Panc1 (cell line): ENCODE measurements at regions of chrX and their contacts with region 1.

Region 1: GRCh38 chrX:51494409-51494808 is 2.0 kb downstream of the NUDT11 start:
- DNase-seq: no peak
- ATAC-seq: no peak
- H3K4me3 ChIP-seq: peak overlapping the region; percentile 52 to 70; a peak in 3 of 4 replicates
- H3K27ac ChIP-seq: no peak overlapping the region
- H3K4me1 ChIP-seq: no peaks in the 10 kb centered on the region; the same call in none of the 2 replicates
- H3K27me3 ChIP-seq: no peaks in the 10 kb centered on the region
- CTCF ChIP-seq: peak; percentile 21; the same call in 1 of the 2 replicates

Region 2: GRCh38 chrX:51598899-51599298 is 104.5 kb after region 1 on chrX:
- CTCF ChIA-PET with region 1: no interaction called
- POLR2A ChIA-PET with region 1: no interaction called
- in situ Hi-C with region 1: no loop called
- intact Hi-C with region 1: loop called (anchors 5 kb)
- DNase-seq: no peak
- ATAC-seq: no peak
- H3K4me3 ChIP-seq: no peak overlapping the region
- H3K27ac ChIP-seq: no peak overlapping the region
- H3K4me1 ChIP-seq: no peaks in the 10 kb centered on the region
- H3K27me3 ChIP-seq: no peaks in the 10 kb centered on the region
- CTCF ChIP-seq: no peak

Region 3: GRCh38 chrX:52261463-52262194 is 767.2 kb after region 1 on chrX:
- CTCF ChIA-PET with region 1: interaction called, 12 read pairs
- POLR2A ChIA-PET with region 1: no interaction called
- in situ Hi-C with region 1: no loop called
- intact Hi-C with region 1: no loop called
- DNase-seq: peak; percentile 57
- ATAC-seq: peak; percentile 100
- H3K4me3 ChIP-seq: peak overlapping the region; percentile 58 to 64
- H3K27ac ChIP-seq: peak overlapping the region; percentile 72
- H3K4me1 ChIP-seq: peaks cover 6% of the 10 kb centered on the region; the same call in 1 of the 2 replicates
- H3K27me3 ChIP-seq: no peaks in the 10 kb centered on the region
- CTCF ChIP-seq: peak; percentile 85